ENCODE measurements at regions of chr19 and their contacts with region 1.

Region 1: DNA sequence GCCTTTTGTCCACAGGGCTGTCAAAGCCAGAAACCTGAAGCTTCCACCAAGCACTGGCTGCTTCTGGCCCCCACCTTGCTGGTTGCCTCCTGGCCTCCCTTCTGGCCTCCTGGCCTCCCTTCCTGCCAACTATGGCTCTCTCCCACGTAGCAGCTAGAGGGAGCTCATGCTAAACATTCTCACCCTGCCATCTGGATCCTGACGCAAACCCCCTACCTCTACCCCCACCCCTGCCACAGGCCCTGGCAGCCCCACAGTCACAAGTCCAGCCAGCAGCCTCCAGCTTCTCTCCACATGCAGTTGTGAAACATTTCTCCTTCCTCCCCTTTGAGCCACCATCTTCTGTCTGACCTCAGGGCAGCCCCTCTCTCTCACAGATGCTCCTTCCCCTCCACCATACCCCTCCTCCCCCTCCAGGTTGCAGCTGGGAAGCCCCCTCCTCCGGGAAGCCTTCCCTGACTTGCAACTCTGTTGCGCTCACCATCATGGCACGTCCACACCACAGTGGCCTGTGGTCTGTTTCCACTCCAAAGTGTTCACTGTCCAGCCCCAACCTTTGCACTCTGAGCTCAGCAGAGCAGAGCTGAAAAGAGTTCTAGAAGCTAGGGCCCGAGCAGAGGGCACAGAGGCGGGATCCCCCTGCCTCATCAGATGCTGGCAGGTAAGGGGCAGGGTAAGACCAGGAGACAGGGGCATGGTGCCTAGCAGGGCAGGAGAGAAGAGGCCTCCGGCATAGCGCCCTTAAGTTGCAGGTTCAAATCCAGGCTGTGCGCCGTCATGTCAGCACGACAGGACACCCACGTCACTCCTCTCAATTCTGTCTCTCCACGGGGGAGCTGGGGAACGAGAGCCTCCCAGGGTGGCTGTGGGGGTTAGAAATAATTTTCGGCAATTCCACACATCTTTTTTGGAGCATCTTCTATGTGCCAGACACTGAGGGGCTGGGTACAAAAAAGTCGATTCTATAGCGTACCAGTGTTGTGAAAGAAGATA is 7.3 kb downstream of the ADGRL1 start:
- DNase-seq: no peak
- H3K27ac ChIP-seq: no peak overlapping the region
- CTCF ChIP-seq: no peak

Region 2: GRCh38 chr19:14248578-14249011 is 49.9 kb after region 1 on chr19:
- CTCF ChIA-PET with region 1: no interaction called
- POLR2A ChIA-PET with region 1: no interaction called
- DNase-seq: no peak
- H3K27ac ChIP-seq: peak overlapping the region; percentile 47
- CTCF ChIP-seq: no peak

Region 3: DNA sequence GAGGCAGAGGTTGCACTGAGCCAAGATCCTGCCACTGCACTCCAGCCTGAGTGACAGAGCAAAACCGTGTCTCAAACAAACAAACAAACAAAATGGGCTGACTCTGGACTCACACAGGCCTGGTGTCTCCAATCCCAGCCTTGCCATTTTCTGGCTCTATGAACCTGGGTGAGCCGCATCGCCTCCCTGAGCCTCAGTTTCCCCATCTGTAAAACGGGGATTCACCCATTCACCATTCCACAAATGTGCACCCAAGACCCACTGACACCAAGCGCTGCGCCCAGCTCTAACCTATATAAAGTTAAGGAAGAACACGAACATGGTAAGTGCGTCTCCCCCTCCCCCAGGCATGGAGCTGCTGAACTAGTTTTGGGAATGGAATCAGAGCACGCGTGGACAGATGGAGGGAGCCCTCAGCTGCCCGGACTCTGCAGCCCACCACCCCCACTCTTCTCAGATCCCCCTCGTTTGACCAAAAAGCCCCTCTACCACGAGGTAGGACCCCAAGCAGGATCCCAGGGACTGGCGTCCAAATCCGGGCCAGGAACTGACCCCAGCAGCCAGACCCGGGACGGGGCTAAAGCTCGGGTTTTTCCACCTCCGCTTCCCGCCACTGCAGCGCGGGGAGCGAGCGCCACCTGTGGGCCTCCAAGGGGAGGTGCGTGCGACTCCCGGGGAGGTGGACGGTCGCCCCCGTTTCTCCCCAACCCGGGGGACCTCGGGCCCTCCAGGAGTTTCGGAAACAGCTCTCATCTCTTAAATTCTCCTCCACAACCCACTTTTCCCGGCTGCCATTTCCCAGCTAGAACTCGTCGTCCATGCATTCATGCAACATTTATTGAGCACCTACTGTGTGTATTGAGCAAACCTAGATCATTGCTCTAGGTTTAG is 149.6 kb after region 1 on chr19:
- CTCF ChIA-PET with region 1: interaction called, 14 read pairs
- POLR2A ChIA-PET with region 1: no interaction called
- DNase-seq: peak; percentile 81
- H3K27ac ChIP-seq: no peak overlapping the region
- CTCF ChIP-seq: peak; percentile 99

Measured in RWPE1 (cell line).